ENCODE measurements at regions of chr19 and their contacts with region 1.

Region 1: GRCh38 chr19:10928525-10929401 is at the starts of genes TIMM29 and YIPF2:
- H3K4me3 ChIP-seq: peak within 1 kb of the TSS; percentile 68
- H3K27ac ChIP-seq: peak within 1 kb of the TSS; percentile 80
- H3K4me1 ChIP-seq: peaks cover 8% of the 10 kb centered on the region
- CTCF ChIP-seq: no peak

Region 2: DNA sequence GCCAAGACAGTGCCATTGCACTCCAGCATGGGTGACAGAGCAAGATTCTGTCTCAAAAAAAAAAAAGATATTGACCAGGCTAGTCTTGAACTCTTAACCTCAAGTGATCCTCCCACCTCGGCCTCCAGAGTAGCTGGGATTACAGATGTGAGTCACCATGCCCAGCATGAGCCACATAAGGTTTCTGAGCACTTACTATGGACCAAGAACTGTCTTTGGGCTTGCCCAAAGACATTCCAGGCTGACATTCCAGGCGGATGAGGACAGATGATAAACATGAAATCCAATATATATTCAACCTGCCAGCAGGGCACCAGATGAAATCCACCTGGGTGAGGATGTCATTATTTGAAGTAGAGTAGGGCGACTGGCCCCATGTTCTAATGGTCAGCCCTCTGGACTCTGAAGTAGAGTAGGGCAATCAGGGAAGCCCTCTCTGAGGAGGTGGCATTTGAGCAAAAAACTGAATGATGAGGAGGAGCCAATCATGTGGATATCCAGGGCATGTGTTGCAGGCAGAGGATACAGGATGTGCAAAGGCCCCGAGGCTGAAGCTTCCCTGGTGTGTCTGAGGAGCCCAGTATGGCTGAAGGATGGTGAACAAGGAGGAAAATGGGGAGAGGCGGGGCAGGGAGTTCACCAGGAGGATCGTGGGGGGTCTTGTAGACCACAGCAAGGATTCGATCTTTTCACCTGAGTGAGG is 76.5 kb before region 1 on chr19:
- CTCF ChIA-PET with region 1: no interaction called
- POLR2A ChIA-PET with region 1: interaction called, 11 read pairs
- H3K4me3 ChIP-seq: no peak overlapping the region
- H3K27ac ChIP-seq: no peak overlapping the region
- H3K4me1 ChIP-seq: no peaks in the 10 kb centered on the region
- CTCF ChIP-seq: no peak

Region 3: GRCh38 chr19:10899151-10899653 is 29.6 kb before region 1 on chr19:
- CTCF ChIA-PET with region 1: no interaction called
- POLR2A ChIA-PET with region 1: interaction called, 10 read pairs
- H3K4me3 ChIP-seq: no peak overlapping the region
- H3K27ac ChIP-seq: no peak overlapping the region
- H3K4me1 ChIP-seq: peaks cover 14% of the 10 kb centered on the region
- CTCF ChIP-seq: no peak

Measured in HEK293 (cell line).